ENCODE measurements at regions of chr2 and their contacts with region 1.

Region 1: GRCh38 chr2:27628767-27629709 is at the starts of genes CCDC121 and GPN1:
- DNase-seq: peak; percentile 98
- H3K4me3 Mint-ChIP-seq: no peak within 1 kb of the TSS
- H3K27ac Mint-ChIP-seq: no peak within 1 kb of the TSS
- H3K4me1 Mint-ChIP-seq: peaks cover 16% of the 10 kb centered on the region
- H3K27me3 Mint-ChIP-seq: no peaks in the 10 kb centered on the region
- total RNA-seq, gene CCDC121: 0.78 to 0.90 TPM
- total RNA-seq, gene GPN1: 45.0 to 45.8 TPM

Region 2: GRCh38 chr2:27582695-27583389 is 46.2 kb before region 1 on chr2 and contains the start of gene ZNF512:
- CTCF ChIA-PET with region 1: interaction called, 3 read pairs
- POLR2A ChIA-PET with region 1: interaction called, 17 read pairs
- DNase-seq: peak; percentile 89
- H3K4me3 Mint-ChIP-seq: peak within 1 kb of the TSS; percentile 99
- H3K27ac Mint-ChIP-seq: peak within 1 kb of the TSS; percentile 91
- H3K4me1 Mint-ChIP-seq: peaks cover 49% of the 10 kb centered on the region
- H3K27me3 Mint-ChIP-seq: peaks cover 7% of the 10 kb centered on the region
- total RNA-seq, gene ZNF512: 31.4 to 34.0 TPM

Region 3: GRCh38 chr2:27663463-27664249 is 34.6 kb after region 1 on chr2 and contains the starts of genes SLC4A1AP and SUPT7L:
- CTCF ChIA-PET with region 1: interaction called, 7 read pairs
- POLR2A ChIA-PET with region 1: interaction called, 13 read pairs
- DNase-seq: peak; percentile 78
- H3K4me3 Mint-ChIP-seq: peak within 1 kb of the TSS; percentile 99
- H3K27ac Mint-ChIP-seq: peak within 1 kb of the TSS; percentile 100
- H3K4me1 Mint-ChIP-seq: peaks cover 60% of the 10 kb centered on the region
- H3K27me3 Mint-ChIP-seq: no peaks in the 10 kb centered on the region
- total RNA-seq, gene SLC4A1AP: 27.3 to 27.9 TPM
- total RNA-seq, gene SUPT7L: 36.5 to 37.2 TPM

Region 4: GRCh38 chr2:28327947-28328922 is 699.2 kb after region 1 on chr2:
- CTCF ChIA-PET with region 1: no interaction called
- POLR2A ChIA-PET with region 1: no interaction called
- DNase-seq: no peak
- H3K4me3 Mint-ChIP-seq: no peak overlapping the region
- H3K27ac Mint-ChIP-seq: peak overlapping the region; percentile 38
- H3K4me1 Mint-ChIP-seq: peaks cover 34% of the 10 kb centered on the region
- H3K27me3 Mint-ChIP-seq: no peaks in the 10 kb centered on the region